PC-9 (cell line): ENCODE measurements at regions of chr1 and their contacts with region 1.

Region 1: DNA sequence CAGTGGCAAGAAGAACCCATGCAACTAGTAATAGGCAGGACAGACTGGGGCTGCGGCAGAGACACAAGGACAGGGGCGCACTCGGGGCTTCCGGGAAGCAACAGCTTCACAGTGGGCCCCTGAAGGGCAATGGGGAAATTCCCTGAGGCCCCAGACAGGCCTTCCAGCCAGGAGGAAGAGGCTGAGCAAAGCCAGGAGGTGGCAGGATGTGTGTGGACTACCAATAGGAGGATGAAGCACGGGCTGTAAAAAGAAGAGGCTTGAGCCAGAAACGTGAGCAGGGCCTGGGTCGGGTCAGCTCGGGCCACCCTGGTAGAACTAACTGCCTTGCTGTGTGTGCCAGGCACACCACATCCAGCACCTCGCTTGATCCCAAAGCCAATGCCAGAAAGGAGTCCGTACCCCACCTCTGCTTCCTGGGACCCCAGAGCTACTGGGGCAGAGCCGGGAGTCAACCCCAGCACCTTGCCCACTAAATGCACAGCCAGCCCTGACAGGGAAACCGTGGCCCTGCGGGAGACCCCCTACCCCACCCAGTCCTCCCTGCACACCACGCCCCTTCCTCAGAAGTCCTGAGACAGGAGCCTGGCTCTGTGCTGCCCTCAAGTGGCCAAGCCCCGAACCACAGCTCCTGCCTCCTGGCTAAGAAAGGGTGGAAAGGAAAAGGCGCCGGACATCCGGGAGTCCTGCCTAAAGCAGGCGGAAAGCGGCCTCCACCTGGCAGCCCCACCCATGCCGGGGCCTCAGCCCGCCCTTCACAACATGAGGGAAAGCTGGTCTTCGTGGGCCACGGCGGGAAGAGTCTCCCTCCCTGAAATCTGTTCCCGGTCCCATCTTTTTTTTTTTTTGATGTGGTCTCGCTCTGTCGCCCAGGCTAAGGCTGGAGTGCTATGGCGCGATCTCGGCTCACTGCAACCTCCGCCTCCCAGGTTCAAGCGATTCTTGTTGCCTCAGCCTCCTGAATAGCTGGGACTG is 33.7 kb downstream of the TTC39A start:
- DNase-seq: peak; percentile 64 to 88
- H3K4me3 ChIP-seq: 0 out of 2 replicates have a peak overlapping the region, but pooled peaks have one; percentile 32
- H3K27ac ChIP-seq: no peak overlapping the region
- H3K4me1 ChIP-seq: no peaks in the 10 kb centered on the region; the same call in 1 of the 2 replicates
- H3K27me3 ChIP-seq: no peaks in the 10 kb centered on the region
- CTCF ChIP-seq: peak; percentile 97

Region 2: GRCh38 chr1:50774759-50775351 is 521.8 kb before region 1 on chr1:
- CTCF ChIA-PET with region 1: no interaction called
- POLR2A ChIA-PET with region 1: no interaction called
- intact Hi-C with region 1: loop called (anchors 10 kb)
- DNase-seq: no peak
- H3K4me3 ChIP-seq: no peak overlapping the region
- H3K27ac ChIP-seq: no peak overlapping the region
- H3K4me1 ChIP-seq: no peaks in the 10 kb centered on the region
- H3K27me3 ChIP-seq: no peaks in the 10 kb centered on the region
- CTCF ChIP-seq: peak; percentile 83

Region 3: GRCh38 chr1:51235673-51236530 is 60.8 kb before region 1 on chr1 and contains the start of gene RNF11:
- CTCF ChIA-PET with region 1: no interaction called
- POLR2A ChIA-PET with region 1: no interaction called
- intact Hi-C with region 1: loop called (anchors 2 kb)
- DNase-seq: peak; percentile 71 to 91
- H3K4me3 ChIP-seq: peak within 1 kb of the TSS; percentile 99
- H3K27ac ChIP-seq: peak within 1 kb of the TSS; percentile 54
- H3K4me1 ChIP-seq: peaks cover 56% of the 10 kb centered on the region
- H3K27me3 ChIP-seq: no peaks in the 10 kb centered on the region
- CTCF ChIP-seq: no peak
- total RNA-seq, gene RNF11: 63.0 and 73.2 TPM in 2 replicates

Region 4: DNA sequence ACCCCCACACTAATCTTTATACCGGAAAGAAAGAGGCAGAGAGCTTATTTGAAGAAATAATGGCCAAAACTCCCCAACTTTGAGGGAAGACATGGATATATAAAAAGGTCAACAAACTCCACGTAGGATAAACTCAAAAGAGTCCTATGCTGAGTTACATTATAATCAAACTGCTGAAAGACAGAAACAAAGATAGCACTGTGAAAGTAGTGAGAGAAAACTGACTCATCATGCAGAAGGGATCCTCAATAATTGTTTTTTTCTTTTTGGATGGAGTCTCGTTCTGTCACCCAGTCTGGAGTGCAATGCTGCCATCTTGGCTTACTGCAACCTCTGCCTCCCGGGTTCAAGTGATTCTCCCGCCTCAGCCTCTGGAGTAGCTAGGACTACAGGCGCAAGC is 82.2 kb after region 1 on chr1:
- CTCF ChIA-PET with region 1: no interaction called
- POLR2A ChIA-PET with region 1: no interaction called
- intact Hi-C with region 1: no loop called
- DNase-seq: no peak
- H3K4me3 ChIP-seq: no peak overlapping the region
- H3K27ac ChIP-seq: no peak overlapping the region
- H3K4me1 ChIP-seq: no peaks in the 10 kb centered on the region
- H3K27me3 ChIP-seq: no peaks in the 10 kb centered on the region
- CTCF ChIP-seq: no peak

Region 5: GRCh38 chr1:51628715-51629600 is 332.3 kb after region 1 on chr1:
- CTCF ChIA-PET with region 1: no interaction called
- POLR2A ChIA-PET with region 1: interaction called, 11 read pairs
- intact Hi-C with region 1: no loop called
- DNase-seq: no peak
- H3K4me3 ChIP-seq: no peak overlapping the region
- H3K27ac ChIP-seq: peak overlapping the region; percentile 17; the same call in 1 of the 2 replicates
- H3K4me1 ChIP-seq: peaks cover 20% of the 10 kb centered on the region
- H3K27me3 ChIP-seq: no peaks in the 10 kb centered on the region
- CTCF ChIP-seq: no peak